ENCODE measurements at regions of chr10 and their contacts with region 1.

Region 1: GRCh38 chr10:46228563-46229071 is 58.2 kb upstream of the ANTXRL start:
- DNase-seq: peak; percentile 61 to 71 (median 66)
- ATAC-seq: peak; percentile 76 to 98 (median 93)
- H3K4me3 ChIP-seq: no peak overlapping the region
- H3K27ac ChIP-seq: no peak overlapping the region
- H3K4me1 ChIP-seq: peaks cover 0 to 5% (median 0%) of the 10 kb centered on the region in 12 donors
- H3K27me3 ChIP-seq: peaks cover 0 to 3% (median 0%) of the 10 kb centered on the region in 9 donors
- CTCF ChIP-seq: peak; percentile 83 to 93 (median 89)
- POLR2A ChIP-seq: no peak

Region 2: DNA sequence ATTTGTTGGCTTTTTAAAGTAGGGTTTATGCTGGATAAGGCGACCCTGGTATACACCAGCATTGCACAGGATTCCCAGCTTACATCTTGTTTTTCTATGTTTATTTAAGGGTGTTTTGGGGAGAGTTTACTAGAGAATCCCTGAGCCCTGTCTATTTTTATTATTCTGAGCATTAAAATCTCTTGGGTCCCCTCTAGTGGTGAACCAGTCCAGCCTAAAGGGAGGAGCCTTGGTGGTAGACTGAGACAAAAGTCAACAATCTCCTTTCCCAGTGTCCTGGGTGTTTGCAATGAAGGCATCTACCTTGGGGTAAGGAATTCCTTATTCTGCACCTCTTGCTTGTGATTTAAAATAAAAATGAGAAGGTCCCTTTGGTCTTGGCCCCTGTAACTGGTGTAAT is 96.4 kb after region 1 on chr10:
- intact Hi-C with region 1: loop called in 3 of 10 experiments (anchors 1 to 5 kb)
- DNase-seq: no peak
- ATAC-seq: no peak
- H3K4me3 ChIP-seq: no peak overlapping the region
- H3K27ac ChIP-seq: no peak overlapping the region
- H3K4me1 ChIP-seq: no peaks in the 10 kb centered on the region
- H3K27me3 ChIP-seq: peaks cover 0 to 4% (median 0%) of the 10 kb centered on the region in 9 donors
- CTCF ChIP-seq: peak in 11 of 12 donors; percentile 28 to 55 (median 36)
- POLR2A ChIP-seq: no peak